PC-9 (cell line): ENCODE measurements at regions of chr12 and their contacts with region 1.

Region 1: DNA sequence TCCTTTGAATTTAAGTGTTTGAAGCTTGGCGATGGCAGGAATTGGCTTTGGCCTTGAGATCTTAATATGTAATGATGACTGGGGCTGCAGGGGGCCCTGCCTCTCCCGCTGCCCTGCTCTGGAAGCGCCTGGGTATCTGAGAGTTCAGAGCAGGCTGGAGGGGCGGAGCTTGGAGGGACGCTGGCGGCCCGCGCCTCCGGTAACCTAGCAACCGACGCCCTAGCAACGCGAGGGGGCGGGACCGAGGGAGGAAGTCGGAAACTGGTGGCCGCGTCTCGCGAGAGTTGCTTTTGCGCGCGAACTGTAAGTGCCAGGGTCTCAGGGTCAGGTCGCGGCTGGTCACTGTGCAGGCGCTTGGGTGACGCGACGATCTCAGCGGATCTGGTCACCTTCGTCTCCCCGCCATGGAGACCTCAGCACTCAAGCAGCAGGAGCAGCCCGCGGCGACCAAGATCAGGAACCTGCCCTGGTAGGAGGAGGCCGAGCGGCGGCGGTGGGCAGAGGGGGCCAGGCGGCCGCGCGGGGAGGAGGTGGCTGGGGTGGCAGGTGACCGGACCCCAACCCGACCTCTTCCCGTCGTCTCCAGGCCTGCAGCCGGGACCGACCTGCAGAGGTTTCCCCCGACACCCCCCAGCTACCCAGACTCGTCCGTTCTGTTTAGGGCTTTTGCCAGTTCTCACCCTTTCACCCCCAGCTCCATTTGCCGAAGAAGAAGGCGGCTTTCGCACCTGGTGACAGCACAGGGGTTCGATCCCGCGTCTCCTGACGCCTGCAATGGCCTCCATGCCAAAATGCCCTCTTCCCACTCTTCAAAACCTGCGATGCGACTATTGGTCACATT is at the start of gene RFC5:
- DNase-seq: peak; percentile 90 to 97
- H3K4me3 ChIP-seq: peak within 1 kb of the TSS; percentile 89
- H3K27ac ChIP-seq: no peak within 1 kb of the TSS
- H3K4me1 ChIP-seq: peaks cover 16% of the 10 kb centered on the region
- H3K27me3 ChIP-seq: no peaks in the 10 kb centered on the region
- CTCF ChIP-seq: no peak
- total RNA-seq, gene RFC5: 30.3 and 34.7 TPM in 2 replicates

Region 2: GRCh38 chr12:117968826-117969659 is 47.6 kb before region 1 on chr12 and contains the start of gene KSR2:
- CTCF ChIA-PET with region 1: no interaction called
- POLR2A ChIA-PET with region 1: interaction called, 6 read pairs
- intact Hi-C with region 1: loop called (anchors 1 kb)
- DNase-seq: peak; percentile 74 to 88
- H3K4me3 ChIP-seq: peak within 1 kb of the TSS; percentile 69
- H3K27ac ChIP-seq: peak within 1 kb of the TSS; percentile 67
- H3K4me1 ChIP-seq: peaks cover 9% of the 10 kb centered on the region; the same call in 1 of the 2 replicates
- H3K27me3 ChIP-seq: no peaks in the 10 kb centered on the region
- CTCF ChIP-seq: no peak
- total RNA-seq, gene KSR2: 1.0 and 2.0 TPM in 2 replicates

Region 3: GRCh38 chr12:117994551-117995438 is 21.8 kb before region 1 on chr12:
- CTCF ChIA-PET with region 1: no interaction called
- POLR2A ChIA-PET with region 1: no interaction called
- intact Hi-C with region 1: no loop called
- DNase-seq: no peak
- H3K4me3 ChIP-seq: no peak overlapping the region
- H3K27ac ChIP-seq: no peak overlapping the region
- H3K4me1 ChIP-seq: no peaks in the 10 kb centered on the region
- H3K27me3 ChIP-seq: no peaks in the 10 kb centered on the region
- CTCF ChIP-seq: no peak

Region 4: DNA sequence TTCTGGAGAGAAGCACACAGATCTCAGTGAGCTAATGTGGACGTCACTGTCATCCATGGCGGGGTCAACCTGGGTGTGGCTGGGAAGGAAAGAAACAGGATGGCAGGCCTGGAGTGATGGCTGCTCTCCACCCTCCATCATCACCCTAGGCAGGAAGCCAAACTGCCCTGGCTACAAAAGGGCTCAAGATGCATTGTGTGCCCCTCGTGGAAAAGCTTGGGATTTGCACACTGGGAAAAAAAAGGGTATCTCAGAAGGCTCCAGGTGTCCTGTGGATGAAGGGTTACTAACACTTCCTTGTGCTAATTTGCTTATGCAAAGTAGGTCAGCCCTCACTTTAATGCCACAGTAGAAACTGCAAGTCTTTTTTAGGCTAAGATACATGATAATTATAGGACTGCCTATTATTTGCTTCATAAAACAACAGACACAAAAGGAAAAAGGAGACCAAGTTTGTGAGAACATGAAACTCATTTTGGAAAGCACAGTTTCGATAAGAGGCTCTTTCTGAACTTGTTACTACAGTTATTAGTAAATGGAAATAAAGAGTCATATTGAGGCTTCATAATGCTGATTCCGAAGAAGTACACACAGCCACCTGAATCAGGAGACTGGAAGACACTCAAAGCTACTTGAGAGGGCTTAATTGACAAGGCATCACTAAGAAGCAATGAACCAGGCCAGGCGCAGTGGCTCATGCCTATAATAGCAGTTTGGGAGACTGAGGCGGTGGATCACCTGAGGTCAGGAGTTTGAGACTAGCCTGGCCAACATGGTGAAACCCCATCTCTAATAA is 18.8 kb after region 1 on chr12:
- CTCF ChIA-PET with region 1: no interaction called
- POLR2A ChIA-PET with region 1: no interaction called
- intact Hi-C with region 1: loop called (anchors 2 kb)
- DNase-seq: no peak
- H3K4me3 ChIP-seq: no peak overlapping the region
- H3K27ac ChIP-seq: no peak overlapping the region
- H3K4me1 ChIP-seq: no peaks in the 10 kb centered on the region
- H3K27me3 ChIP-seq: no peaks in the 10 kb centered on the region
- CTCF ChIP-seq: no peak

Region 5: GRCh38 chr12:118312578-118312977 is 295.9 kb after region 1 on chr12:
- CTCF ChIA-PET with region 1: interaction called, 15 read pairs
- POLR2A ChIA-PET with region 1: no interaction called
- intact Hi-C with region 1: no loop called
- DNase-seq: peak in 1 of 2 experiments; percentile 70
- H3K4me3 ChIP-seq: peak overlapping the region; percentile 27; the same call in 1 of the 2 replicates
- H3K27ac ChIP-seq: peak overlapping the region; percentile 89
- H3K4me1 ChIP-seq: peaks cover 68% of the 10 kb centered on the region
- H3K27me3 ChIP-seq: no peaks in the 10 kb centered on the region
- CTCF ChIP-seq: no peak